CD8-positive, alpha-beta T cell (primary cell): ENCODE measurements at regions of chr4 and their contacts with region 1.

Region 1: DNA sequence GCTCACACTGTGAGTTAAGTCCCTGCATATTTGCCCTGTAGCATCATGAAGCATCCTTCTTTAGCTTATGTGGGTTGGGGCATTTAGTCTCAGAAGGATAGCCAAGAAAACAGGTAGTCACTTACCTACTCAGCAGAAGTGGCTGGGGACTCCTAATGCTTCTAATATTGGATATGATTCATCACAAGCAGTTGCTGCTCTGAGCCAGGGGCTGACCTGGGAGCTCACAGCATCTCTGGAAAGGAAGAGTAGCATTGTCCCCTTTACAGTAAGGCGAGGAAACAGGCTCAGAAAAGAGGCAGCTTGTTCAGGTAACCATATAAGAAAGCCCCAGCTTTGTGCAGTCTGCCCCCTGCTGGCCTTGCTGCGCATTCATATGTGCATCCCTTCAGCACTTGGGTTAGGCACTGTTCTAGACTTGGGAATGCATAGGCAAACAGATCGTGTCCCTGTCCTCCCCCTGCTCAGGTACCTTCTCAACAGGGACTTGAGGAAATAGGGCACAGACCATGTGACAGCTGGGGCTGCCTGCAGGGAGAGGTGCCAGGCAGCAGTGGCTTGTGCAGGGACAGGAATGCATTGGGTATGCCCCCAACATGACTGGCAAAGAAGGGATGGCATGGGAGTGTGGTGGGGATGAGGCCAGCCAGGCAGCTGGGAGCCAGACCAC is 35.7 kb upstream of the TBC1D14 start:
- DNase-seq: peak; percentile 69 to 89 (median 82)
- ATAC-seq: peak; percentile 96
- H3K4me3 ChIP-seq: no peak overlapping the region
- H3K4me3 Mint-ChIP-seq: no peak overlapping the region
- H3K27ac ChIP-seq: no peak overlapping the region
- H3K27ac Mint-ChIP-seq: no peak overlapping the region
- H3K4me1 ChIP-seq: no peaks in the 10 kb centered on the region
- H3K4me1 Mint-ChIP-seq: peaks cover 3% of the 10 kb centered on the region
- H3K27me3 ChIP-seq: no peaks in the 10 kb centered on the region
- H3K27me3 Mint-ChIP-seq: no peaks in the 10 kb centered on the region
- CTCF ChIP-seq: peak; percentile 79

Region 2: GRCh38 chr4:6695660-6696630 is 178.0 kb before region 1 on chr4:
- CTCF ChIA-PET with region 1: interaction called, 11 read pairs
- POLR2A ChIA-PET with region 1: no interaction called
- intact Hi-C with region 1: no loop called
- DNase-seq: peak in 8 of 9 experiments; percentile 46 to 86 (median 70)
- ATAC-seq: peak; percentile 88
- H3K4me3 ChIP-seq: peak overlapping the region in 1 of 2 experiments; percentile 10
- H3K4me3 Mint-ChIP-seq: peak overlapping the region; percentile 30
- H3K27ac ChIP-seq: peak overlapping the region; percentile 67 to 91
- H3K27ac Mint-ChIP-seq: peak overlapping the region; percentile 93
- H3K4me1 ChIP-seq: peaks cover 86% of the 10 kb centered on the region
- H3K4me1 Mint-ChIP-seq: peaks cover 76% of the 10 kb centered on the region
- H3K27me3 ChIP-seq: no peaks in the 10 kb centered on the region
- H3K27me3 Mint-ChIP-seq: no peaks in the 10 kb centered on the region
- CTCF ChIP-seq: no peak

Region 3: GRCh38 chr4:6727081-6727942 is 146.6 kb before region 1 on chr4:
- CTCF ChIA-PET with region 1: interaction called, 251 read pairs
- POLR2A ChIA-PET with region 1: no interaction called
- intact Hi-C with region 1: no loop called
- DNase-seq: no peak
- ATAC-seq: no peak
- H3K4me3 ChIP-seq: no peak overlapping the region
- H3K4me3 Mint-ChIP-seq: no peak overlapping the region
- H3K27ac ChIP-seq: no peak overlapping the region
- H3K27ac Mint-ChIP-seq: no peak overlapping the region
- H3K4me1 ChIP-seq: peaks cover 8% of the 10 kb centered on the region
- H3K4me1 Mint-ChIP-seq: peaks cover 10% of the 10 kb centered on the region
- H3K27me3 ChIP-seq: no peaks in the 10 kb centered on the region
- H3K27me3 Mint-ChIP-seq: no peaks in the 10 kb centered on the region
- CTCF ChIP-seq: no peak

Region 4: DNA sequence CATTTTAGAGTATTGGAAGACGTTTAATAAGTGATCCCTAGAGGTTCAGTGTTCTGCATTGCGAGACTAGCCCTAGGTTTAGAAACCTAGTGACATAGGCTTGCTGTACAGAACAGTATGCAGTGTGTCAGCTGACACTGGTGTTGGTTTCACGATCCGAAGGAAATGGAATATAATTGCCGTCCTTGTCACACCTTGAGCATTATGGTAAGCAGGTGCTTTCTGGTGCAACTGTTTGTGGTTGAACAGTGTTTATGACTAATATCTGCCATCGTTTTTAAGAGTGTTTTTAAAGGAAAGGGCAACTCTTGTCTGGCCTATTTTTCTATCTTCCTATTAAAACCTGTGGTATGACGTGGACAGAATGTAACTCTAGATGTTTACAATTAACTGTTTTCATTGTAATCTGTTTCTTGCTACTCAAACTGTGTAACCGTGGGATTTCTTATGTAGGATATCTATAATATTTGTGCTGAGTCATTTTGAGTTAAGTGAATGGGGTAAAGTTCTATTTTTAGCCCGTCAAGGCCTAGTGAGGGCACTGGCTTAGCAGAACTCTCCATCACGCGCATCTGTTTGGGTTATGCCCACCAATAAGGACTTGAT is 18.1 kb before region 1 on chr4:
- CTCF ChIA-PET with region 1: interaction called, 43 read pairs
- POLR2A ChIA-PET with region 1: interaction called, 3 read pairs
- intact Hi-C with region 1: no loop called
- DNase-seq: peak in 4 of 9 experiments; percentile 18 to 77 (median 54)
- ATAC-seq: peak; percentile 84
- H3K4me3 ChIP-seq: no peak overlapping the region
- H3K4me3 Mint-ChIP-seq: no peak overlapping the region
- H3K27ac ChIP-seq: peak overlapping the region in 1 of 2 experiments; percentile 53
- H3K27ac Mint-ChIP-seq: peak overlapping the region; percentile 73
- H3K4me1 ChIP-seq: no peaks in the 10 kb centered on the region
- H3K4me1 Mint-ChIP-seq: peaks cover 22% of the 10 kb centered on the region
- H3K27me3 ChIP-seq: no peaks in the 10 kb centered on the region
- H3K27me3 Mint-ChIP-seq: no peaks in the 10 kb centered on the region
- CTCF ChIP-seq: no peak

Region 5: GRCh38 chr4:6892190-6892908 is 18.4 kb after region 1 on chr4:
- CTCF ChIA-PET with region 1: interaction called, 28 read pairs
- POLR2A ChIA-PET with region 1: no interaction called
- intact Hi-C with region 1: no loop called
- DNase-seq: peak in 6 of 9 experiments; percentile 17 to 66 (median 50)
- ATAC-seq: peak; percentile 70
- H3K4me3 ChIP-seq: peak overlapping the region in 1 of 2 experiments; percentile 16
- H3K4me3 Mint-ChIP-seq: peak overlapping the region; percentile 42
- H3K27ac ChIP-seq: peak overlapping the region in 1 of 2 experiments; percentile 44
- H3K27ac Mint-ChIP-seq: peak overlapping the region; percentile 60
- H3K4me1 ChIP-seq: peaks cover 27% of the 10 kb centered on the region
- H3K4me1 Mint-ChIP-seq: peaks cover 27% of the 10 kb centered on the region
- H3K27me3 ChIP-seq: no peaks in the 10 kb centered on the region
- H3K27me3 Mint-ChIP-seq: no peaks in the 10 kb centered on the region
- CTCF ChIP-seq: no peak

Region 6: DNA sequence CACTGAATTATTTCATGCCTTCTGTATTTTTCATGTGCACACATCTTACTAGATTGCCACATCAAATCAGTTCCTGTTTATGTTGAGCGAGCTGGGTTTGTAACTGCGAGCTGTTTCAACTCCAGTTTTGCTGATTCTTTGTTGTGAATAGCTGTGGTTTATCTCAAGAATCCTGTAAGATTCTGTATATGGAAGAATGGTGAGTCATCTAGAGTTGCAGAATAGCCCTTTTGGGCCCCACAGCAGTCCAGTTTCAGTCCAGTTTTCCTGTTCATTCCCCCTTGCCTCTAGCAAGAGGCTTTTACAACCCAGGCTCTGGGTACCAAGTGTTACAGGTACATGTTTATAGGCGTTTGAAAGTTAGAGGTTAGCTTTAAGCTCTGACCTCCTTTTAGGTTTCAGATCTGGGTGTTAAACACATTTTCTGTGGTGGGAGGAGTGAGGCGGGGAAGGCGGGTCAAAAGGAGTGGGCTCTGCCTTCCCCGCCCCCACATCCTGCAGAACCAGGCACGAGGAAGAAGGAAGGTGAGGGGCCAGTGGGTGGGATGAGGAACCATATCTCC is 68.4 kb after region 1 on chr4:
- CTCF ChIA-PET with region 1: no interaction called
- POLR2A ChIA-PET with region 1: no interaction called
- intact Hi-C with region 1: no loop called
- DNase-seq: peak in 8 of 9 experiments; percentile 26 to 75 (median 50)
- ATAC-seq: peak; percentile 81
- H3K4me3 ChIP-seq: peak overlapping the region; percentile 25 to 30
- H3K4me3 Mint-ChIP-seq: peak overlapping the region; percentile 79
- H3K27ac ChIP-seq: peak overlapping the region; percentile 18 to 72
- H3K27ac Mint-ChIP-seq: peak overlapping the region; percentile 92
- H3K4me1 ChIP-seq: peaks cover 60% of the 10 kb centered on the region
- H3K4me1 Mint-ChIP-seq: peaks cover 83% of the 10 kb centered on the region
- H3K27me3 ChIP-seq: no peaks in the 10 kb centered on the region
- H3K27me3 Mint-ChIP-seq: no peaks in the 10 kb centered on the region
- CTCF ChIP-seq: no peak

Region 7: DNA sequence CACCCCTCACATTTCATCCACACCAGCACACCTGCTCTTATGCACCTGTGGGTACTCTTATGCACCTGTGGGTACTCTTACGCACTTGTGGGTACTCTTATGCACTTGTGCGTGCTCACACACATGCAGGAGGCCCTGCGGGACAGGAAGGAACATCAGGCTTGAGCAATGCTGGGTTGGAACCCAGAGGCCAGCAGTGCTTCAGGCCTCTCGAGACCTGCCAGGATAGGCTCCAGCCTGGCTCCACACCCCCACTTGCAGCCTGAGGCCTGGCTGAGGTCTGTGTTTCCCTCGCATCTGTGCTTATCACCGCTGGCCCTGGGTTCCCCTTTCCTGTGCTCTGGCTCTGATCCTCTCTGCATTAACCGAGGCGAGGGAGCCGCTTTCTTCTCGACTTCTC is 353.1 kb after region 1 on chr4:
- CTCF ChIA-PET with region 1: no interaction called
- POLR2A ChIA-PET with region 1: no interaction called
- intact Hi-C with region 1: no loop called
- DNase-seq: no peak
- ATAC-seq: no peak
- H3K4me3 ChIP-seq: no peak overlapping the region
- H3K4me3 Mint-ChIP-seq: no peak overlapping the region
- H3K27ac ChIP-seq: no peak overlapping the region
- H3K27ac Mint-ChIP-seq: no peak overlapping the region
- H3K4me1 ChIP-seq: no peaks in the 10 kb centered on the region
- H3K4me1 Mint-ChIP-seq: no peaks in the 10 kb centered on the region
- H3K27me3 ChIP-seq: no peaks in the 10 kb centered on the region
- H3K27me3 Mint-ChIP-seq: peaks cover 3% of the 10 kb centered on the region
- CTCF ChIP-seq: no peak